ENCODE measurements at regions of chr12 and their contacts with region 1.

Region 1: GRCh38 chr12:6873094-6874014 is at the start of gene SPSB2:
- DNase-seq: peak; percentile 91 to 100
- H3K4me3 ChIP-seq: peak within 1 kb of the TSS; percentile 84
- H3K27ac ChIP-seq: peak within 1 kb of the TSS; percentile 37
- H3K4me1 ChIP-seq: peaks cover 36% of the 10 kb centered on the region
- H3K27me3 ChIP-seq: no peaks in the 10 kb centered on the region
- CTCF ChIP-seq: no peak
- total RNA-seq, gene SPSB2: 28.9 and 30.1 TPM in 2 replicates

Region 2: GRCh38 chr12:5525783-5526367 is 1347.5 kb before region 1 on chr12:
- CTCF ChIA-PET with region 1: no interaction called
- POLR2A ChIA-PET with region 1: no interaction called
- intact Hi-C with region 1: no loop called
- DNase-seq: no peak
- H3K4me3 ChIP-seq: no peak overlapping the region
- H3K27ac ChIP-seq: no peak overlapping the region
- H3K4me1 ChIP-seq: no peaks in the 10 kb centered on the region
- H3K27me3 ChIP-seq: peaks cover 55% of the 10 kb centered on the region
- CTCF ChIP-seq: no peak

Region 3: GRCh38 chr12:6416596-6416995 is 456.8 kb before region 1 on chr12:
- CTCF ChIA-PET with region 1: no interaction called
- POLR2A ChIA-PET with region 1: no interaction called
- intact Hi-C with region 1: no loop called
- DNase-seq: no peak
- H3K4me3 ChIP-seq: no peak overlapping the region
- H3K27ac ChIP-seq: no peak overlapping the region
- H3K4me1 ChIP-seq: no peaks in the 10 kb centered on the region
- H3K27me3 ChIP-seq: no peaks in the 10 kb centered on the region
- CTCF ChIP-seq: no peak

Region 4: DNA sequence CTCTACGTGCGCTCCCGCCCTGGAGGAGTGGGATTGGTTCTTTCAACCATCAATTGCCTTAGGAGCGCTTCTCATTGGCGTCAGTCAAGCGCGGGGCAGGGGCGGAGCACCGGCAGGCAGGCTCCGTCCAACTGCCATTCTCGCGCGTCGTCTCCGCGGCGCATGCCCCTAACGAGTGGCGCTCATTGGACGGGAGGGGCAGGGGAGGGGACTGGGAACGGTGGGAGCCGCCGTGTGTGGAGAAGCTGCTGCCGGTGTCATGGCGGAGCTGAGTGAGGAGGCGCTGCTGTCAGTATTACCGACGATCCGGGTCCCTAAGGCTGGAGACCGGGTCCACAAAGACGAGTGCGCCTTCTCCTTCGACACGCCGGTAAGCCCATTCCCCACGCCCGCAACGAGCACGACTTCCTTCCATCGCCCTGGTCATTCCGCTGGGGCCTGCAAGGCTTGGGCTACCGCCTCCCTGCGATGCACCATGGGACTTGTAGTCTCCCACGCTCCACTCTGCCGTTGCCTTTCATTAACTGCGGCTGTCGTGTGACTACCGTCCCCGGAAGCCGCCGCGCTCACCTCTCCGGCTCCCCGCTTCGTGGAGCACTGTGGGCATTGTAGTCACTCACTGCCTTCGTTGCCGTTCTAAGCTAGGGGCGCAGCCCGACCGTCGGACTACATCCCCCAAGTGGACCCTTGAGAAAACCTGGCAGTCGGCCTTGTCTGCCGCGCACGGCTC is 21.3 kb before region 1 on chr12 and contains the start of gene USP5:
- CTCF ChIA-PET with region 1: interaction called, 9 read pairs
- POLR2A ChIA-PET with region 1: interaction called, 16 read pairs
- intact Hi-C with region 1: loop called (anchors 1 kb)
- DNase-seq: peak; percentile 99 to 100
- H3K4me3 ChIP-seq: peak within 1 kb of the TSS; percentile 83
- H3K27ac ChIP-seq: peak within 1 kb of the TSS; percentile 69
- H3K4me1 ChIP-seq: peaks cover 25% of the 10 kb centered on the region
- H3K27me3 ChIP-seq: no peaks in the 10 kb centered on the region
- CTCF ChIP-seq: no peak
- total RNA-seq, gene USP5: 267 and 308 TPM in 2 replicates

Region 5: GRCh38 chr12:6904280-6905278 is 31.2 kb after region 1 on chr12 and contains the start of gene LRRC23:
- CTCF ChIA-PET with region 1: interaction called, 28 read pairs
- POLR2A ChIA-PET with region 1: interaction called, 5 read pairs
- intact Hi-C with region 1: no loop called
- DNase-seq: peak; percentile 93 to 98
- H3K4me3 ChIP-seq: peak within 1 kb of the TSS; percentile 86
- H3K27ac ChIP-seq: 0 out of 2 replicates have a peak within 1 kb of the TSS, but pooled peaks have one; percentile 1
- H3K4me1 ChIP-seq: peaks cover 22% of the 10 kb centered on the region
- H3K27me3 ChIP-seq: no peaks in the 10 kb centered on the region
- CTCF ChIP-seq: no peak
- total RNA-seq, gene LRRC23: 29.3 and 38.8 TPM in 2 replicates

Region 6: DNA sequence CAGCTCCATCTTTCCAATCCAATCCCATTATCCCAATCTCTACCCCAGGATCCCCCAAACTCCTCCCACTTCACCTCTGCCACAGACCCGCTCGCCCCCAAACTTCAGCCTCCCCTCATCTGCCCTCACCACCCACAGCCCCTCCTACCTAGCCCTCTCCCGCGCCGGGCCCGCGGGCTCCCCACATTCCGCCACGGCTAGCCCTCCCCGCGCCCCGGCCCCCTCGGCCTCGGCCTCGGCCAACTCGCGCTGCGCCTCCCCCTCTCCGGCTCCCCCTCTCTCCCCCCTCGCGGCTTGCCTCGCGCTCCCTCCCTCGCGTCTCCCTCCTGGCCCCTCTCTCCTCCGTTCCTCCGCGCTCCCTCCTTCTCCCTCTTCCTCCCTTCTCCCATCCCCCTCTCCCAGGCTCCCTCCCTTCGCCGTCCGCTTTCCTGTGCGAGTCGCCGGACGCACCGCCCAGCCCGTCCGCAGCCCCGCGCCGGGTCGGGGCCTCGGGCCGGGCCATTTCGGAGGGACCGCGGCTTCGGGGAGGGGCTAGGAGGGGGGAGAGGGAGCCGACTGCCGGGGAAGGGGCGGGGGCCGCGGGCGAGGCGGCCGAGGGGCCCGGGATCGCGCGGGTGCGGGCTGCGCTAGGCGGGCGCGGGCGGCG is 54.1 kb after region 1 on chr12 and contains the start of gene ATN1:
- CTCF ChIA-PET with region 1: interaction called, 15 read pairs
- POLR2A ChIA-PET with region 1: interaction called, 14 read pairs
- intact Hi-C with region 1: loop called (anchors 2 kb)
- DNase-seq: peak in 1 of 2 experiments; percentile 66
- H3K4me3 ChIP-seq: peak within 1 kb of the TSS; percentile 85
- H3K27ac ChIP-seq: peak within 1 kb of the TSS; percentile 75
- H3K4me1 ChIP-seq: peaks cover 53% of the 10 kb centered on the region
- H3K27me3 ChIP-seq: no peaks in the 10 kb centered on the region
- CTCF ChIP-seq: no peak
- total RNA-seq, gene ATN1: 158 and 159 TPM in 2 replicates

Region 7: DNA sequence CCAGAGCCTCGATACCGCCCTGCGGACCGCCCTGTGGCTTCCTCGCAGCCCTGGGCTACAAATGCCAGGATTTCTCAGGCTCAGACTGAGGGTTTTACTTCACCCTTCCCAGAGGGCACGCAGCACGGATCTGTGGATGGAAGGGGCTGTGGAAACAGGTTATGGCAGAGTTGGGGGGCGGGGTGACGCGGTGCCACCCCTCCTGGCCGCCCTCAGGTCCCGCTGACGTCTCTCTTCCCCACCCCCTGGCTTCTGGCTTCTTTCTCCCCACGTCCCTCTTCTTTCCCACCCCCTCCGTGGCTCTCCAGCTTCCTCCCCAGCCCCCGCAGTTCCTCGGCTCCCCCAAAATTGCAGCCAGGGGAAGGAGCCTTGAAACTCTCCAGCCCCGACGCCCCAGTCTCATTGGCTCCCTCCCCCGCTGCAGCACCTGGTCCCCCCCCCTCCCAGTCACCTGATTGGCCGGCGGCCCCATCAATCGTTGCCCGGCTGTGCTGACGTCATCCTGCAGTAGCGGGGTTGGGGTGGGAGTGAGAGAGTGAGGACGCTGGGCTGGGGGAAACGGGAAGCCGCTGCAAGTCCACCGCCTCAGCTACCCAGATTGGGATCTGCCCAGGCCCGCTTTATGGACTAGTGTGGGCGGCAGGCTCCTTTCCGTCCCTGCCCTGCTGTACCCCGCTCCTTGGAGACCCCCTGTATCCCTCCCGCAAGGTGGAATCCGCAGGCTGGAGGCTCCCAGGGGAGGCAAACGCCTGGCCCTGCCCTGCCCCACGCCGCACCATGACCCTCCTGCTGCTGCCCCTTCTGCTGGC is 256.7 kb after region 1 on chr12 and contains the start of gene CLSTN3:
- CTCF ChIA-PET with region 1: no interaction called
- POLR2A ChIA-PET with region 1: no interaction called
- intact Hi-C with region 1: loop called (anchors 1 kb)
- DNase-seq: peak; percentile 54 to 87
- H3K4me3 ChIP-seq: peak within 1 kb of the TSS; percentile 66
- H3K27ac ChIP-seq: no peak within 1 kb of the TSS
- H3K4me1 ChIP-seq: peaks cover 19% of the 10 kb centered on the region
- H3K27me3 ChIP-seq: no peaks in the 10 kb centered on the region
- CTCF ChIP-seq: no peak
- total RNA-seq, gene CLSTN3: 111 and 153 TPM in 2 replicates

Region 8: GRCh38 chr12:8461426-8461825 is 1588.1 kb after region 1 on chr12:
- CTCF ChIA-PET with region 1: no interaction called
- POLR2A ChIA-PET with region 1: interaction called, 13 read pairs
- intact Hi-C with region 1: no loop called
- DNase-seq: no peak
- H3K4me3 ChIP-seq: no peak overlapping the region
- H3K27ac ChIP-seq: no peak overlapping the region
- H3K4me1 ChIP-seq: no peaks in the 10 kb centered on the region
- H3K27me3 ChIP-seq: peaks cover 10% of the 10 kb centered on the region; the same call in 1 of the 2 replicates
- CTCF ChIP-seq: no peak

Measured in PC-9 (cell line).